ENCODE measurements at regions of chr18 and their contacts with region 1.

Region 1: DNA sequence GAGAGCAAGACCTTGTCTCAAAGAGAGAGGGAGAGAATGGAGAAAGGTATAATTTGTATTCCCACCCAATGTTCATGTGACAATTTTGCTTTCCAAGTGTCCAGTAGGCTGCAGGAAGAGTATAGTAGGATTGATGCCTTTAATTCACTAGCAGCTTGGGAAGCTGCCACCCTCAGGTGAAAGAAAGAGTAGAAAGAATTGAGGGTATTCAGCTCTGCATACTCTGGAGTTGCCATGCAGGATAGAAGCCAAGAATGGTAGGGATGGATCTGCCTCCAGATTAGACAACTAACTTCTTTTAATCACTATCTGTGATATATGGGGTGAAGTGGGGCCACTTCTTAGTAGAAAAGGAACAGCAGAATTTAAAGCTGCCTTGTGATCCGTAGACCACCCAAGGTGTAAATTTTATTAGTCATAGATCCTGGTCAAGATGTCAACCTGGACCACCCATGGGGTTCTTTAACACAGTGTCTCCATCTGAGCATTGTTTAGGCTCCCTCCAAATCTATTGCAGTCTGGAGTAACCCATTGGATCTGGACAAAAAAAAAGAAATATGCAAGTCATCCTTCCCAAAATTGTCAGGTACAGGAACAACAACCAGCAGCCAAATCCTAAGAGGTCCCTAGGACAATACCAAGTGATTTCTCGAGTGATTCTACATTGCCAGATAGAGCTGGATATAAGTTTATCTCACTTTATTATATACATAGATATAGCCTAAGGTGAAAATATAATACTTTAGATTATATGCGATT is 33.1 kb upstream of the DTNA start:
- DNase-seq: no peak
- H3K4me3 ChIP-seq: no peak overlapping the region
- H3K27ac ChIP-seq: no peak overlapping the region
- H3K4me1 ChIP-seq: no peaks in the 10 kb centered on the region
- H3K27me3 ChIP-seq: no peaks in the 10 kb centered on the region
- CTCF ChIP-seq: no peak
- POLR2A ChIP-seq: no peak

Region 2: DNA sequence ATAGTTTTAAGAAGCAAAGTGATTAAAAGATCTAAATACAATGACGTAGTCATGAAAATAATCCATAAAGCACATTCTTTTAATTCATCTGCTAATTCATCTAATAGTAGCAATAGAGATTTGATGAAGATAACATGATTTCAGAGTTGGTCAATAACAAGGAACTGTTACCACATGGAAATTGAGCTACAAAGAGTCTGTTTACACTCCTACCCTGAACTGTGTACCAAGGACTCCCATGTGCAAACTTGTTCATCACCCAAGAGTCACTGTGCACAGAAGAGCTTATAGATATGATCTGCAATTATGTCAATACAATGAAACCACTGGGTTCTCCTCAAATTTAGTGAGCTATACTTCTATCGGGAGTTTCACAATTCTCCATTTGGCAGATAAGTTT is 45.4 kb before region 1 on chr18:
- intact Hi-C with region 1: no loop called
- DNase-seq: no peak
- H3K4me3 ChIP-seq: no peak overlapping the region
- H3K27ac ChIP-seq: no peak overlapping the region
- H3K4me1 ChIP-seq: no peaks in the 10 kb centered on the region
- H3K27me3 ChIP-seq: no peaks in the 10 kb centered on the region
- CTCF ChIP-seq: no peak
- POLR2A ChIP-seq: no peak

Region 3: GRCh38 chr18:34787931-34788532 is 111.0 kb after region 1 on chr18:
- intact Hi-C with region 1: loop called (anchors 10 kb)
- DNase-seq: no peak
- H3K4me3 ChIP-seq: no peak overlapping the region
- H3K27ac ChIP-seq: no peak overlapping the region
- H3K4me1 ChIP-seq: no peaks in the 10 kb centered on the region
- H3K27me3 ChIP-seq: no peaks in the 10 kb centered on the region
- CTCF ChIP-seq: peak; percentile 33 to 75 (median 51)
- POLR2A ChIP-seq: no peak

Measured in vagina (tissue), 2 donors.